ENCODE measurements at regions of chr13 and their contacts with region 1.

Region 1: DNA sequence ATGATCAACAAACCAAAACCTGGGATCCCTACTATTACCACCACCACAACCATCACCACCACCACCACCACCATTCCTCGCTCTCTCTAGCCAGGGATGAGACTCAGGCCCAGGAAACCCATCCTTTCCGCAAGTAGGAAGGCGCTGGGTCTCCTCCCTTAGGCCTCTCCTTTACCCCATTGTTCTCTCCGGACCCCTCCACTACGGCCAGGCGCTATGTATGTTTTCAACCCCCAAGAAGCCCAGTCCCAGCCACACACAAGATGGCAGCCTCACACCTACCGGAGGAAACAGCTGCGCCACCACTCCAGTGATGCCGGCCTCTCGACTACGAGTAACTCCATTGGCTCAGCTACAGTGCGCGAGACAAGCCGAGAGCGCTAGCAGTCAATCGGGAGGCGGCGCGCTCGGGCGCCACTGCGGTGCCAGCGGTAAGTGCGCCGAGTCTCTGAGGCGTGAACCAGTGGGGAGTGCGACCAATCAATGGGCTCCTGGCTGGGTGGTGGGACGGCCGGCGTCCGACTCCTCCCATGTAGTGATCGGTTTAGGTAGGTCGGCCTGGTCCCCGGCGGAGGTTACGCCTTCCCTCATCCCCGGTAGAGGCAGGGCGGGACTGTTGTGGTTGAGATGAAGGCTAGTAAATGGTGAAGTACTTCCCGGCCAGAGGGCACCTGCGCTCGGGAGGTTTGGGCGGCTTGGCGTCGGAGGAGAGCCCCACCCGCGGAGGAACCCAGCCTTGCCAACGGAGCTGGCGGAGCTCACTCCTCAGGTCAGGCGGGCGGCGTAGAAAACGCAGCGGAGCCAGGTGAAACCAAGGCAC is at the starts of genes CAB39L and SETDB2:
- DNase-seq: peak; percentile 100
- H3K4me3 ChIP-seq: peak within 1 kb of the TSS; percentile 66 to 88 (median 80)
- H3K27ac ChIP-seq: peak within 1 kb of the TSS; percentile 92 to 97 (median 94)
- H3K4me1 ChIP-seq: peaks cover 0 to 46% (median 41%) of the 10 kb centered on the region in 4 donors
- H3K27me3 ChIP-seq: no peaks in the 10 kb centered on the region
- CTCF ChIP-seq: peak in 2 of 4 experiments; percentile 33 to 36
- EP300 ChIP-seq: peak in 1 of 4 donors; percentile 11
- POLR2A ChIP-seq: peak; percentile 64 to 78
- total RNA-seq, gene CAB39L: 121 to 180 (median 150) TPM
- total RNA-seq, gene SETDB2: 7.5 to 12.5 (median 11.2) TPM

Region 2: DNA sequence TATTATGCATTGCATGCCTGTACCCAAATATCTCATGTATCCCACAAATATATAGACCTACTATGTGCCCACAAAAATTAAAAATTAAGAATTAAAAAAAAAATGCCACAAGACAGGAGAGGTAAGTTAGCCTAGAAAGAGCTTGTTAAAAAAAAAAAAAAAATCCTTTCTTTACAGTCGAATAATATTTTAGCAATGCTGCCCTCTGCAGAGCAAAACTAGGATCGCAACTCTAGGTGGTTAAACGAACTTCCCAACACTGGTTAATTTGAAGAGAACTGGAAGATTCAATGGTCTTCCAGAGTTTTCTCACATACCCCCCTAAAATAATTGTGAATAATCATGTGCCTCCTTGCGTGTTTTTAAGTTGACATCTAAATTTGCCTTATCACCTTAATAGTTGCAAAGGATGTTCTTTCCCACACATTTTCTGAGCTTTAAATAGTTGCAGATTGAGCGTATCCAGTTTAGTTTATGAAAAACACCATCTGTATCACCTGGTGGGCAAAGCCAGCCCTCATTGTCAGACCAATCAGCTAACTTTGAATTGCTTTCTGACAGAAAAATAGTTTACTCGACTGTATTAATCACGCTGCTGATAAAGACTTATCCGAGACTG is 863.6 kb before region 1 on chr13:
- intact Hi-C with region 1: loop called (anchors 10 kb)
- DNase-seq: peak; percentile 76
- H3K4me3 ChIP-seq: no peak overlapping the region
- H3K27ac ChIP-seq: no peak overlapping the region
- H3K4me1 ChIP-seq: peaks cover 0 to 17% (median 12%) of the 10 kb centered on the region in 4 donors
- H3K27me3 ChIP-seq: no peaks in the 10 kb centered on the region
- CTCF ChIP-seq: peak; percentile 49 to 73 (median 62)
- EP300 ChIP-seq: no peak
- POLR2A ChIP-seq: no peak

Region 3: GRCh38 chr13:49110122-49110912 is 333.6 kb before region 1 on chr13:
- intact Hi-C with region 1: loop called (anchors 10 kb)
- DNase-seq: peak; percentile 91
- H3K4me3 ChIP-seq: peak overlapping the region; percentile 27 to 57 (median 49)
- H3K27ac ChIP-seq: peak overlapping the region; percentile 35 to 70 (median 65)
- H3K4me1 ChIP-seq: peaks cover 0 to 39% (median 35%) of the 10 kb centered on the region in 4 donors
- H3K27me3 ChIP-seq: no peaks in the 10 kb centered on the region
- CTCF ChIP-seq: no peak
- EP300 ChIP-seq: peak in 1 of 4 donors; percentile 18
- POLR2A ChIP-seq: no peak

Region 4: GRCh38 chr13:49495783-49496762 is 52.2 kb after region 1 on chr13 and contains the start of gene PHF11:
- intact Hi-C with region 1: loop called (anchors 5 kb)
- DNase-seq: peak; percentile 89
- H3K4me3 ChIP-seq: peak within 1 kb of the TSS; percentile 55 to 69 (median 67)
- H3K27ac ChIP-seq: peak within 1 kb of the TSS; percentile 91 to 94 (median 93)
- H3K4me1 ChIP-seq: peaks cover 0 to 12% (median 5%) of the 10 kb centered on the region in 4 donors
- H3K27me3 ChIP-seq: no peaks in the 10 kb centered on the region
- CTCF ChIP-seq: peak in 1 of 4 experiments; percentile 20
- EP300 ChIP-seq: no peak
- POLR2A ChIP-seq: peak; percentile 21 to 36
- total RNA-seq, gene PHF11: 29.6 to 52.1 (median 37.5) TPM

Region 5: GRCh38 chr13:49620170-49620621 is 176.3 kb after region 1 on chr13:
- intact Hi-C with region 1: no loop called
- DNase-seq: no peak
- H3K4me3 ChIP-seq: no peak overlapping the region
- H3K27ac ChIP-seq: no peak overlapping the region
- H3K4me1 ChIP-seq: peaks cover 0 to 11% (median 5%) of the 10 kb centered on the region in 4 donors
- H3K27me3 ChIP-seq: no peaks in the 10 kb centered on the region
- CTCF ChIP-seq: no peak
- EP300 ChIP-seq: no peak
- POLR2A ChIP-seq: no peak

Region 6: GRCh38 chr13:49792550-49793324 is 348.8 kb after region 1 on chr13 and contains the start of gene KPNA3:
- intact Hi-C with region 1: loop called (anchors 5 kb)
- DNase-seq: peak; percentile 98
- H3K4me3 ChIP-seq: peak within 1 kb of the TSS; percentile 63 to 100 (median 94)
- H3K27ac ChIP-seq: peak within 1 kb of the TSS; percentile 92 to 99 (median 97)
- H3K4me1 ChIP-seq: peaks cover 0 to 36% (median 31%) of the 10 kb centered on the region in 4 donors
- H3K27me3 ChIP-seq: no peaks in the 10 kb centered on the region
- CTCF ChIP-seq: no peak
- EP300 ChIP-seq: no peak
- POLR2A ChIP-seq: no peak
- total RNA-seq, gene KPNA3: 41.5 to 64.3 (median 46.3) TPM

Measured in sigmoid colon (tissue), 7 donors.